Breast epithelium (tissue), 4 donors: ENCODE measurements at regions of chr11 and their contacts with region 1.

Region 1: DNA sequence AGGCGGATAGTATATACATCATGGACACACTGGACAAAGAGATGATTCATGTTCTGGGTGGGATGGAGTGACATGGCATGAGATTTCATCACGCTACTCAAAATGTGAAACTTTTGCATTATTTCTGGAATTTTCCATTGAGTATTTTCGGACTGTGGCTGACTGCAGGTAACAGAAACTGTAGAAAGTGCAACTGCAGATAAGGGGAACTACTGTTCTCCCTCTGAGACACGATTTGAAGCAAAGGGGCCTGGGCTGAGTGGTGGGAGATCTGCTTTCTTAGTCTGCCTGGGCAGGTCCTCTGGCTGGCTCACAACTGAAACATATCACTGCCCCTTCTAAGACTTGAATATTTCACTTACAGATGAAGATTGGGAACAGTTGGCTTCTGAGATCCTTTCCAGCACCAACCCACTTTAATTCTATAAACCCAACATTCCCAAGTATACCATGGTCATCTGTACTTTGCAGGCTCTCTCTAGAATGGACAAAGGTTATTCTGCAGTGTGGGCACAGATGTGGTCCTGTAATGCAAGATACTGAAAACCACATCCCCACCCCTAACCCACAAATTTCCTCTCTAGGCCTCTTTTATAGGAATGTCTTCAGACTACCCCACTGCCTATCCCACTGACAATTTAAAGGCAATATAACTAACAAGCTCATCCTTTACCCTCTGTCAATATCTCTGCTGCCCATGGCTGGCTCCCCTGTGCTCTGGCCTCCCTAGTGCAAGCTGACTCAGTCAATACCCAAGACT is 121.1 kb downstream of the KCNC1 start:
- DNase-seq: no peak
- H3K4me3 ChIP-seq: no peak overlapping the region
- H3K27ac ChIP-seq: no peak overlapping the region
- H3K4me1 ChIP-seq: no peaks in the 10 kb centered on the region
- H3K27me3 ChIP-seq: no peaks in the 10 kb centered on the region
- CTCF ChIP-seq: no peak
- POLR2A ChIP-seq: no peak

Region 2: GRCh38 chr11:17845431-17845881 is 10.3 kb before region 1 on chr11:
- intact Hi-C with region 1: loop called (anchors 1 kb)
- DNase-seq: no peak
- H3K4me3 ChIP-seq: no peak overlapping the region
- H3K27ac ChIP-seq: no peak overlapping the region
- H3K4me1 ChIP-seq: no peaks in the 10 kb centered on the region
- H3K27me3 ChIP-seq: no peaks in the 10 kb centered on the region
- CTCF ChIP-seq: no peak
- POLR2A ChIP-seq: no peak